Natural killer cell (primary cell): ENCODE measurements at regions of chr1 and their contacts with region 1.

Region 1: DNA sequence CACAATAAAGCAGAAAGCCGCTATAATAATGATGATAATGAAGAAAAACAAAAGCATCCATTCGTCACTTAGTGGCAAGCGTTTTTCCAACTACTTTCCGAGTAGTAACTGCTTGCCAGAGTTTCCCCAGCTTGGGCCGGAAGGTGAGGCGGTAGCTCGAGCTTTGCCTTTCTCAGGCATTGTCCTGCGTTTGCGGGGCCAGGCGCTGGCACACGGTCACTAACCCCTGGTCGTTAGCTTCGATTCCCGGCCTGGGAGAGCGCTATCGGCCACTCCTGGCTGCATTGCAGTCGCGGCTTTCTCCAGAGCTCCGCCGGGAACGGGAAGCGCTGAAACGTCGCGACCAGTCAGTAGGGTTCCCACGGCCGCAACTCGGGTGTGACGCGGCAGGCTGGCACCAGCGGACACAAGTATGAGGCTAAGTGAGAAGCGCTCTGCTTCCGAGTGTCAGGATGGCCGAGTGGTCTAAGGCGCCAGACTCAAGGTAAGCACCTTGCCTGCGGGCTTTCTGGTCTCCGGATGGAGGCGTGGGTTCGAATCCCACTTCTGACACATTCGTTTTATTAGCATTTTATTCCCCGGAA is 14.6 kb upstream of the ZNF692 start:
- DNase-seq: peak; percentile 91 to 95
- ATAC-seq: peak; percentile 78 to 87 (median 82)
- H3K4me3 ChIP-seq: peak overlapping the region; percentile 86
- H3K4me3 Mint-ChIP-seq: peak overlapping the region; percentile 99
- H3K27ac ChIP-seq: peak overlapping the region; percentile 83
- H3K27ac Mint-ChIP-seq: peak overlapping the region; percentile 94 to 100
- H3K4me1 ChIP-seq: peaks cover 17% of the 10 kb centered on the region
- H3K4me1 Mint-ChIP-seq: peaks cover 20 to 22% of the 10 kb centered on the region in 2 donors
- H3K27me3 ChIP-seq: no peaks in the 10 kb centered on the region
- H3K27me3 Mint-ChIP-seq: no peaks in the 10 kb centered on the region
- CTCF ChIP-seq: no peak

Region 2: DNA sequence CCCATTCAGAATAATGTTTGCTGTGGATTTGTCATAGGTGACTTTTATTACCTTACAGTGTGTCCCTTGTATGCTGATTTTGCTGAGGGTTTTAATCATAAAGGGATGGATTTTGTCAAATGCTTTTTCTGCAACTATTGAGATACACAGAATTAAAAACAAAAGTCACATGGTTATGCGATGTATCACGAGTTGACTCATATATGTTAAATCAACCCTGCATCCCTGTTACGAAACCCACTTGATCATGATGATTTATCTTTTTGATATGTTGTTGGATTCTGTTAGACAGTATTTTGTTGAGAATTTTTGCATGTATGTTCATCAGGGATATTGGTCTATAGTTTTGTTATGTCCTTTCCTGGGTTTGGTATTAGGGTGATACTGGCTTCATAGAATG is 288.2 kb before region 1 on chr1:
- intact Hi-C with region 1: no loop called
- DNase-seq: no peak
- ATAC-seq: no peak
- H3K4me3 ChIP-seq: no peak overlapping the region
- H3K4me3 Mint-ChIP-seq: no peak overlapping the region
- H3K27ac ChIP-seq: no peak overlapping the region
- H3K27ac Mint-ChIP-seq: no peak overlapping the region
- H3K4me1 ChIP-seq: no peaks in the 10 kb centered on the region
- H3K4me1 Mint-ChIP-seq: no peaks in the 10 kb centered on the region
- H3K27me3 ChIP-seq: no peaks in the 10 kb centered on the region
- H3K27me3 Mint-ChIP-seq: peaks cover 4 to 8% of the 10 kb centered on the region in 2 donors
- CTCF ChIP-seq: no peak

Region 3: GRCh38 chr1:248825909-248826760 is 47.4 kb before region 1 on chr1 and contains the start of gene SH3BP5L:
- intact Hi-C with region 1: loop called (anchors 1 kb)
- DNase-seq: peak; percentile 87 to 96
- ATAC-seq: peak; percentile 85 to 95 (median 87)
- H3K4me3 ChIP-seq: peak within 1 kb of the TSS; percentile 93
- H3K4me3 Mint-ChIP-seq: peak within 1 kb of the TSS; percentile 96
- H3K27ac ChIP-seq: peak within 1 kb of the TSS; percentile 99
- H3K27ac Mint-ChIP-seq: peak within 1 kb of the TSS; percentile 96
- H3K4me1 ChIP-seq: peaks cover 46% of the 10 kb centered on the region
- H3K4me1 Mint-ChIP-seq: peaks cover 55 to 56% of the 10 kb centered on the region in 2 donors
- H3K27me3 ChIP-seq: no peaks in the 10 kb centered on the region
- H3K27me3 Mint-ChIP-seq: no peaks in the 10 kb centered on the region
- CTCF ChIP-seq: peak; percentile 79
- total RNA-seq, gene SH3BP5L: 19.0 to 27.5 (median 22.9) TPM

Region 4: DNA sequence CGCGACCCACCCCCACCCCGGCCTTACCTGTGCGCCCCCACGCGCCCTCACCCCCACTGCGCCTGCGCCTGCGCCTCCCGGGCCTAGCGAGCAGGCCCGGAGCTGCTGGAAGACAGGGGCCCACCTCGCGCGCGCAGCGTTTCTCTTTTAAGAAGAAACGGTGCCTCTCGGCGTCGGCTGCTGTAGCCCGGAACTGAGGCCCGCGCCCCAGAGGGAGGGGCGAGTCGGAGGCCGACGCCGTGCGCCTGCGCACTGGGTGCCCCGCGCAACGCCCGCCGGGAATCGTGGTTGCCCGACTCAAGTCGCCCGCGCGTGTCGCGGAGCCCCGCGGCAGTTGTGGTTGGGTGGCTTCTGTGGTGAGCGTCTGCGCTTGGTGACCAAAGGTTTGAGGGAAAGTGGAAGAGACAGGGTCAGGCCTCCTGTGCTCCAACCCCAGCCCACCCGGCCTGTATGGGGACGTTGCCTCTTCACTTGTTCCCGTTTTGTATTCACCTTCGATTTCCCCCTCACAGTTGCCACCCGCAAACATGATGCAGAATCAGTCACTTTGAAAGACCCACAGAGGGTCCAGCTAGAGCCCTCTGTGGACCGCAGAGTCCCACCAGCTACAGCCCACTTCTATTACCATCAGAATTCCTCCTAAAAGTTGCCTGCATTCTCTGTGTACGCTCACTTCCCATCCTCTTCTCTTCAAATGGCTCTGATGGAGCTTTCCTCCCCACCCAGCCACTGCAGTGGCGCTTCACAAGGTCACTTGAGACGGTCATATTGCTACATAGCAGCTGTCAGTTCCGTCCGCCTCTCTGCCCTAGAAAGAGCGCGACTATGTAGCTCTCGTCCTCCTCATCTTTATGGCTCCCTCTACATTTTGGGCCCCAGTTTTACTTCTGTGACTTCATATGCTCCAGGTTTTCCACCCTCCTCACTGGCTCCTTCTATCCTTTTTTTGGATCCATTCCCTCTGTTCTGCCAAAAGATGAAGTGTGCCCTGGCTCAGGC is 14.3 kb before region 1 on chr1 and contains the start of gene ZNF692:
- intact Hi-C with region 1: loop called (anchors 1 kb)
- DNase-seq: peak; percentile 95 to 98
- ATAC-seq: peak; percentile 85 to 94 (median 88)
- H3K4me3 ChIP-seq: peak within 1 kb of the TSS; percentile 66
- H3K4me3 Mint-ChIP-seq: peak within 1 kb of the TSS; percentile 86
- H3K27ac ChIP-seq: peak within 1 kb of the TSS; percentile 92
- H3K27ac Mint-ChIP-seq: peak within 1 kb of the TSS; percentile 90 to 94
- H3K4me1 ChIP-seq: peaks cover 64% of the 10 kb centered on the region
- H3K4me1 Mint-ChIP-seq: peaks cover 47 to 60% of the 10 kb centered on the region in 2 donors
- H3K27me3 ChIP-seq: no peaks in the 10 kb centered on the region
- H3K27me3 Mint-ChIP-seq: no peaks in the 10 kb centered on the region
- CTCF ChIP-seq: peak; percentile 5
- total RNA-seq, gene ZNF692: 50.4 to 58.7 (median 52.3) TPM

Region 5: DNA sequence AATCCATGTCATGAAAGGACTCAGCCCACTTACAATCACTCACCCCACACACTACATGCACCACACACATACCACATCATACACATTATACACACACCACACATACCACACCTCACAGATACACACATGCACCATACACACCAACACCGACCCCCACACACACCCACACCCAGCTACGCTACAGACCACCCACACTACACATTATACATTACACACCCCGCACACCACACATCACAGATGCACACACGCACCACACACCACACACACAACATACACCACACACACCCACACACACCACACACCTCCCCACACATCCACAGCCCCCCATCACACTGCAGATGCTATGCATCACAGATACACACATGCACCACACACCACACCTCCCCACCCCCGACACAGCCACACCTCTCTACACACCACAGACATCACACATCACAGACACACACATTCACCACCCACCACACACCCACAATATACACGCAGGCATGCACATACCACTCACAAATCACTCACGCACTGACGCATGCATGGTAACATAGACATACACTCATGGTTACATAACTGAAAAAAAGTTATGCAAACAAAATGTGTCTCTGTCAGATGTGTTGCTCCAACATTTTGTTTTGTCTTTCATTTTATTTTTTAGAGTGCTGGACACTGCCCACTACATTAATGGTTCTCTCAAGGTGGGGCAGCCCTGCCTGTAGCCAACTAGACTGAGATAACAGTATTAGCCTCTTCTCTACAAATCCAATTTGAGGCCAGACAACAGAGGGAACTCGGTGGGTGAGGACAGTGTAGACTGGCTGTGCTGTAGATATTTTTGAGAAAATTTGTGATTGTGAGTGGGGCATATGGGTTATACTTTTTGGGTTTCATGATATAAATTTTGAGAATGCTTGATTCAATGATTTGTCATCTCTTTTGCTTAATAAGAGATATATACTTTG is 17.3 kb after region 1 on chr1:
- intact Hi-C with region 1: no loop called
- DNase-seq: no peak
- ATAC-seq: peak; percentile 31 to 45 (median 44)
- H3K4me3 ChIP-seq: no peak overlapping the region
- H3K4me3 Mint-ChIP-seq: no peak overlapping the region
- H3K27ac ChIP-seq: no peak overlapping the region
- H3K27ac Mint-ChIP-seq: no peak overlapping the region
- H3K4me1 ChIP-seq: no peaks in the 10 kb centered on the region
- H3K4me1 Mint-ChIP-seq: peaks cover 0 to 13% of the 10 kb centered on the region in 2 donors
- H3K27me3 ChIP-seq: no peaks in the 10 kb centered on the region
- H3K27me3 Mint-ChIP-seq: peaks cover 12 to 16% of the 10 kb centered on the region in 2 donors
- CTCF ChIP-seq: no peak

Region 6: DNA sequence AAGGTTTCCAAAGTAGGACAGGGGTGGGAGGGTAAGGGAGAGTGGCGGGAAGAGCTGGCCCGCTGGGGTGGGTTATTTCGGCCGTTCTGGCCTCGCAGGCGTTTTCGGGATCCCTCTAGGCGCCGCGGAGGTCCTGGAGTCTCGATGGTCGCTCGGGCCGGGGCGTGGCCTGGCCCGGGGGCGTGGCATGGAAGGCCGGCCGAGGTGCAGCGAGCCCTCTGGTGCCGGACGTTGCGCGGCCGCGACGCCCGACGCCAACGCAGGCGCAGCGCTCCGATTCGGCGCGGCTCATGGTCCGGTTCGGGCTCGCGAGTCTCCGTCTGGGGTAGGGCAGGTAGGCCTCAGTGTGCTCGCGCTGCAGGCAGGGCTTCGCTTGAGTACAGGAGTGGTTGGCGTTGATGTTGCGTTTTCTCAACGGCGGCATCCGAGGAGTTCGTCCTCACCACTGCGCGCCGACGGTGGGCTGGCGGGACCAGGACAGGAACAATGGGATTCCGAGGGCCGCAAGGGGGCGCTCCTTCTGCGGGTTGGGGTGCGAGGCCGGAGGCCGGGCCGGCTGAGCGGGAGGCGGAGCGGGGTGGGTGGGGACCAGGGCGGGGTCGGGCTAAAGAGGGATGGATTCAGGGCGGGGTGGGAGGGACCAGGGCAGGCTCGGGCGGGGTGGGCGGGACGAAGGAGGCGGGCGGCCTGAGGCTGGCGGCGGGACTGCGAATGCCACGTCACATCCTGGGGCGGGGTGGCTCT is 32.7 kb after region 1 on chr1 and contains the start of gene PGBD2:
- intact Hi-C with region 1: loop called (anchors 2 kb)
- DNase-seq: peak; percentile 92 to 96
- ATAC-seq: peak; percentile 82 to 90 (median 84)
- H3K4me3 ChIP-seq: peak within 1 kb of the TSS; percentile 70
- H3K4me3 Mint-ChIP-seq: peak within 1 kb of the TSS; percentile 94
- H3K27ac ChIP-seq: peak within 1 kb of the TSS; percentile 90
- H3K27ac Mint-ChIP-seq: peak within 1 kb of the TSS; percentile 92 to 93
- H3K4me1 ChIP-seq: peaks cover 14% of the 10 kb centered on the region
- H3K4me1 Mint-ChIP-seq: peaks cover 30 to 33% of the 10 kb centered on the region in 2 donors
- H3K27me3 ChIP-seq: no peaks in the 10 kb centered on the region
- H3K27me3 Mint-ChIP-seq: peaks cover 5 to 12% of the 10 kb centered on the region in 2 donors
- CTCF ChIP-seq: peak; percentile 56
- total RNA-seq, gene PGBD2: 3.1 to 9.2 (median 6.2) TPM